Esophagus muscularis mucosa (tissue), 4 donors: ENCODE measurements at regions of chr1 and their contacts with region 1.

Region 1: GRCh38 chr1:228073857-228074545 is 8.5 kb upstream of the ARF1 start:
- DNase-seq: no peak
- H3K4me3 ChIP-seq: no peak overlapping the region
- H3K27ac ChIP-seq: no peak overlapping the region
- H3K4me1 ChIP-seq: no peaks in the 10 kb centered on the region
- H3K27me3 ChIP-seq: peaks cover 0 to 41% (median 0%) of the 10 kb centered on the region in 4 donors
- CTCF ChIP-seq: no peak
- EP300 ChIP-seq: no peak
- POLR2A ChIP-seq: no peak

Region 2: GRCh38 chr1:227563324-227564201 is 510.4 kb before region 1 on chr1 and contains the start of gene ZNF678:
- intact Hi-C with region 1: loop called (anchors 10 kb)
- DNase-seq: peak; percentile 98
- H3K4me3 ChIP-seq: peak within 1 kb of the TSS; percentile 76 to 92 (median 84)
- H3K27ac ChIP-seq: peak within 1 kb of the TSS; percentile 86 to 91 (median 89)
- H3K4me1 ChIP-seq: peaks cover 8 to 21% (median 20%) of the 10 kb centered on the region in 4 donors
- H3K27me3 ChIP-seq: peaks cover 0 to 34% (median 22%) of the 10 kb centered on the region in 4 donors
- CTCF ChIP-seq: no peak
- EP300 ChIP-seq: no peak
- POLR2A ChIP-seq: no peak
- total RNA-seq, gene ZNF678: 4.0 to 9.1 (median 5.6) TPM